Activated T-helper 1 cell treated with anti-CD3 and anti-CD28 coated beads, Interleukin-12 subunit alpha, Interleukin-12 subunit beta, Interleukin-2, Interleukin-4 antibody, amounts not matched to agents 30 ng/mL and 10 ng/mL and 1 ng/mL, durations not matched to agents 14 hours and 24 hours and 36 hours (primary cell): ENCODE measurements at regions of chr22 and their contacts with region 1.

Region 1: DNA sequence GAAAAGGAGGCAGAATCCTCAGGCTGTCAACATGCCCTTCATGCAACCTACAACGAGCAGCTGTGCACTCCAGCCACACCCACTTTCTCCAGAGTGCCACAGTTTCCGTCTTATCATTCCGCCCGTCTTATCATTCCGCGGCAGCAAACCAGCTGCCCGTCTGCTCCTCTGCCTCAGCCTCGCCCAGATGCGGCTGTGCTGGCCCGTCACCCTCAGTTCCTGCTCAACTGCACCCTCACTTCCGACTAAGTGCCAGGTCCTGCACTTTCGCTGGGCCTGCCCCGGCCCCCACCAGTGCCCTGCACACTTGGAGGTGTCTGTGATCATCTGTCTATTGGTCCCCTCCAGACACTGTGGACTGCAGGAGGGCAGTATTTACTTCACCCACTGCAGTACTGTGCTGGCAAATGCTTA is 43.7 kb downstream of the MICAL3 start:
- DNase-seq: peak; percentile 11
- H3K4me3 Mint-ChIP-seq: peak overlapping the region; percentile 77
- H3K27ac Mint-ChIP-seq: peak overlapping the region; percentile 43
- H3K4me1 Mint-ChIP-seq: peaks cover 28% of the 10 kb centered on the region
- H3K27me3 Mint-ChIP-seq: no peaks in the 10 kb centered on the region

Region 2: GRCh38 chr22:17920145-17920605 is 60.5 kb before region 1 on chr22:
- intact Hi-C with region 1: no loop called
- DNase-seq: no peak
- H3K4me3 Mint-ChIP-seq: no peak overlapping the region
- H3K27ac Mint-ChIP-seq: no peak overlapping the region
- H3K4me1 Mint-ChIP-seq: peaks cover 13% of the 10 kb centered on the region
- H3K27me3 Mint-ChIP-seq: no peaks in the 10 kb centered on the region

Region 3: DNA sequence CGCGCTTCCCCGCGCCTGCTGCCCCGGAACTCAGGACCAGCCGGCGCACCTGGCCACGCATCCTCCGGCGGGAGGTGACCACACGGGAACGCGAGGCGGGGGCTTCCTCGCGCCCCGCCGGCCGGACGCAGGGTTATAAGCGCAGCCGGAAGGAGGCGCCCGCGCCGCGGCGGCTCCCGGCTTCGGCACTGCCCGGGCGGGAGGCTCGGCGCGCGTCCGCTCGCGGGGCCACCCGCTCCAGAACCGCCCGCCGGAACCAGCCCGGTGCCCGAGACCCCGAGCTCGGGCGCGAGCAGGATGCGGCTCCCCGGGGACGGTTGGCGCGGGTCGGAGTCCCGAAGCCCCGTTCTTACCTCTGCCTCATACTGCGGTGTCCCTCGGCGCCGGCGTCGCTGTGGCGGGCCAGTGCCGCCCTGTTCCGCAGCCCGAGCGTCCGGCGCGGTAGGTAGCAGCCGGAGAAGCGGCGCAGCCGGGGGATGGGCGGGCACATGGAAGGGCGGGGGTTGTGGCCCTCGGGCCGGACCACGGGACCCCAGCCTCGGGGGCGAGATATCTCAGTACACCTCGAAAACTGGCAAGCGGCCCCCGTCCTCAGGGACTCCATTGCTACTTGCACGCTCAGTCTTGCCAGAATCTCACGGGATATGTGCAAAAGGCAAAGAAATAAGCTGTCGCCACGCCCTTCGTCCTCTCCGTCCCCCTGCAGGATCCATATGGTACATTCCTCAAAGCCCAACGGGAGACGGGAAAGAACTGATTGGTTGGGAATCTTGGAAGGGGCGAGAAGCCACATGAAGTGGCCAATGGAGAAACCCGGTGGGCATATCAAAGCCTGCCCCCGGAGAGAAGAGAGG is 20.6 kb after region 1 on chr22:
- intact Hi-C with region 1: loop called (anchors 2 kb)
- DNase-seq: peak; percentile 67
- H3K4me3 Mint-ChIP-seq: peak overlapping the region; percentile 92
- H3K27ac Mint-ChIP-seq: peak overlapping the region; percentile 95
- H3K4me1 Mint-ChIP-seq: peaks cover 44% of the 10 kb centered on the region
- H3K27me3 Mint-ChIP-seq: peaks cover 29% of the 10 kb centered on the region